ENCODE measurements at regions of chr7 and their contacts with region 1.

Region 1: GRCh38 chr7:87188930-87189329 is 30.6 kb downstream of the TMEM243 start:
- DNase-seq: no peak
- H3K4me3 Mint-ChIP-seq: no peak overlapping the region
- H3K27ac Mint-ChIP-seq: no peak overlapping the region
- H3K4me1 Mint-ChIP-seq: peaks cover 29% of the 10 kb centered on the region
- H3K27me3 Mint-ChIP-seq: no peaks in the 10 kb centered on the region

Region 2: DNA sequence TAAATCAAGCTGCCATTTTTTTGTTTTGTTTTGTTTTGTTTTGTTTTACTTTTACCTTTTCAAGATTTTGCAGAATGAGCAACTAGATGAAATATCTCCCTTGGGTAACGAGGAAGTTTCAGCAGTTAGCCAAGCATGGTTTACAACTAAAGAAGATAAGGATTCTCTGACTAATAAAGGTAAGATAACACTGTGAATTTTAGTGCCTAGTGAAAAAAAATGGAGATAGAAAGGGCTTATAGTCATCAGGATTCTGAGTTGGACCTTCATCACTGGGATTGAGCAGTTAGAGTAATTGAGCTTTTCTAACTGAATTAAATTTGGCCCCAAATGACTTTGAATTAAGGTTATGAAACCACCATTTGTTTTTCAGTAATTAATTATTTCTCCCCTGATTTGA is 15.5 kb before region 1 on chr7:
- intact Hi-C with region 1: loop called (anchors 2 kb)
- DNase-seq: no peak
- H3K4me3 Mint-ChIP-seq: no peak overlapping the region
- H3K27ac Mint-ChIP-seq: no peak overlapping the region
- H3K4me1 Mint-ChIP-seq: peaks cover 18% of the 10 kb centered on the region
- H3K27me3 Mint-ChIP-seq: no peaks in the 10 kb centered on the region

Region 3: GRCh38 chr7:87231256-87231655 is 42.3 kb after region 1 on chr7:
- intact Hi-C with region 1: loop called (anchors 2 kb)
- DNase-seq: no peak
- H3K4me3 Mint-ChIP-seq: no peak overlapping the region
- H3K27ac Mint-ChIP-seq: no peak overlapping the region
- H3K4me1 Mint-ChIP-seq: peaks cover 9% of the 10 kb centered on the region
- H3K27me3 Mint-ChIP-seq: peaks cover 7% of the 10 kb centered on the region

Measured in activated T-helper 1 cell treated with anti-CD3 and anti-CD28 coated beads, Interleukin-12 subunit alpha, Interleukin-12 subunit beta, Interleukin-2, Interleukin-4 antibody, amounts not matched to agents 30 ng/mL and 10 ng/mL and 1 ng/mL, durations not matched to agents 14 hours and 24 hours and 36 hours (primary cell).